ENCODE measurements at regions of chr18 and their contacts with region 1.

Region 1: GRCh38 chr18:35386600-35387351 is 9.6 kb upstream of the ZNF396 start:
- DNase-seq: peak; percentile 68
- ATAC-seq: peak; percentile 96
- H3K4me3 Mint-ChIP-seq: no peak overlapping the region
- H3K27ac Mint-ChIP-seq: no peak overlapping the region
- H3K4me1 Mint-ChIP-seq: peaks cover 9% of the 10 kb centered on the region
- H3K27me3 Mint-ChIP-seq: no peaks in the 10 kb centered on the region; the same call in 1 of the 2 replicates
- CTCF ChIP-seq: peak; percentile 90

Region 2: GRCh38 chr18:35355140-35355618 is 31.6 kb before region 1 on chr18:
- CTCF ChIA-PET with region 1: interaction called, 17 read pairs
- POLR2A ChIA-PET with region 1: no interaction called
- DNase-seq: peak; percentile 65
- ATAC-seq: peak; percentile 100
- H3K4me3 Mint-ChIP-seq: no peak overlapping the region
- H3K27ac Mint-ChIP-seq: no peak overlapping the region
- H3K4me1 Mint-ChIP-seq: no peaks in the 10 kb centered on the region; the same call in 1 of the 2 replicates
- H3K27me3 Mint-ChIP-seq: peaks cover 3% of the 10 kb centered on the region; the same call in 1 of the 2 replicates
- CTCF ChIP-seq: no peak

Region 3: DNA sequence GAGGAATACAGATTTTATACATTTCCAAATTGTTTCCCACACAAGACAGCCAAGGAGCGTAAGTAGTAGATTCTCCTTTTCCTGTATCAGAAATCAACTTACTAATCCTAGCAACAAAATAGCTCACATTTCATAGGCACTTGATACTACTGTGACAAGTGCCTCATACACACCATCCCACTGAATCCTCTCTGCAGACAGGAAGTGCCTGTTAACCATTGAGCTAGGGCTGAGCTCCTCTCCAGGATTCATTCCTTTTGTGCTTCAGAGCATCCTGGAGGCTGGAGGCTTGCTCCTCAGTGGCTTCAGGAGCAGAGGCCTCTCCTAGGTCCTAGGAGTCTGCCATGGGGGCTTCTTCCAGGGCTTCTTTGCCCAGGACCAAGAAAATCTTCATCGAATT is 11.2 kb after region 1 on chr18:
- CTCF ChIA-PET with region 1: interaction called, 19 read pairs
- POLR2A ChIA-PET with region 1: no interaction called
- DNase-seq: no peak
- ATAC-seq: no peak
- H3K4me3 Mint-ChIP-seq: no peak overlapping the region
- H3K27ac Mint-ChIP-seq: no peak overlapping the region
- H3K4me1 Mint-ChIP-seq: no peaks in the 10 kb centered on the region
- H3K27me3 Mint-ChIP-seq: no peaks in the 10 kb centered on the region; the same call in 1 of the 2 replicates
- CTCF ChIP-seq: no peak

Region 4: DNA sequence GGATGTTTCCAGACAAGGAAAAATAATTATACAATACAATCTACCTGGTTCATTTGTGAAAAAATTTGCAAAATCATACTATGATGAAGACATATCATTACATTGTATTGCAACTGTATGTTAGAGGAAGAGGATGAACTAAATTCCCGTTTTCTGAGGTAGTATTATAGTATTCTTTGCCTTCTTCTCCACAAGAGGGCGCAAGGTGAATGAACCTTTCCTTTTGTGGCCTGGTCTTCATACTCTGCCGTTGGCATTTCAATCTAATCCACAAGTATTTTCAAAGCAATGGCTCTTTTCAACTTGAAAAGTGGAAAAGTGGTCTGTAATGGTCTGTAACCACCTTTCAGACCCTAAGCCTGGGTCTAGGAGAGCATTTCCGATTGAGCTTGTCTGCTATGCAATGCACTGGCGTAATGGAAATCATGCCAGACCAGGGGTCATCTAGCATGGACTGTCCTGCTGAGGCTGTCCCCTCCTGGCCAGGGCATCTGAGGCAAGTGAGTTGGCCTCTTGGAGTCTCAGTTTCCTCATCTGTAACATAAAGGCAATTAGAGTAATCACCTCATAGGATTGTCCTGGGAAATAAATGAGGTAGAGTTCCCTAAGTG is 21.2 kb after region 1 on chr18:
- CTCF ChIA-PET with region 1: interaction called, 17 read pairs
- POLR2A ChIA-PET with region 1: no interaction called
- DNase-seq: no peak
- ATAC-seq: peak; percentile 76
- H3K4me3 Mint-ChIP-seq: no peak overlapping the region
- H3K27ac Mint-ChIP-seq: no peak overlapping the region
- H3K4me1 Mint-ChIP-seq: peaks cover 16% of the 10 kb centered on the region
- H3K27me3 Mint-ChIP-seq: peaks cover 6% of the 10 kb centered on the region
- CTCF ChIP-seq: peak; percentile 65

Region 5: DNA sequence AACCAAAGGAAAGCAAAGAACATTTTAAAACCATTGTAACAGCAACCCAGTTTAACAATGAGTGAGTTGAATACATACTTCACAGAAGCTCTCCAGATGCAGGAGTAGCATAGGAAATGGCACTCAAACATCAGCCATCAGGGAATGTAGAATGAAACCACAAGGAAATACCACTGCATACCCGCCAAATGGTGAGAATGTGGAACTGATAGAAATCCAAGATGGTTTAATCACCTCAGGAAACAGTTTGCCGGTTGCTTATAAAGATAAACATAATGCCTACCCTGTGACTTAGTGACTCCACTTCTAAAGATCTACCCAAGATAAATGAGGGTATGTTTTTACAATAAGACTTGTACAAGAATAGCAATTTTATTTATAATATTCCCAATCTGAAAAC is 326.8 kb after region 1 on chr18:
- CTCF ChIA-PET with region 1: interaction called, 10 read pairs
- POLR2A ChIA-PET with region 1: no interaction called
- DNase-seq: no peak
- ATAC-seq: no peak
- H3K4me3 Mint-ChIP-seq: no peak overlapping the region
- H3K27ac Mint-ChIP-seq: no peak overlapping the region
- H3K4me1 Mint-ChIP-seq: peaks cover 3% of the 10 kb centered on the region
- H3K27me3 Mint-ChIP-seq: no peaks in the 10 kb centered on the region
- CTCF ChIP-seq: no peak

Region 6: DNA sequence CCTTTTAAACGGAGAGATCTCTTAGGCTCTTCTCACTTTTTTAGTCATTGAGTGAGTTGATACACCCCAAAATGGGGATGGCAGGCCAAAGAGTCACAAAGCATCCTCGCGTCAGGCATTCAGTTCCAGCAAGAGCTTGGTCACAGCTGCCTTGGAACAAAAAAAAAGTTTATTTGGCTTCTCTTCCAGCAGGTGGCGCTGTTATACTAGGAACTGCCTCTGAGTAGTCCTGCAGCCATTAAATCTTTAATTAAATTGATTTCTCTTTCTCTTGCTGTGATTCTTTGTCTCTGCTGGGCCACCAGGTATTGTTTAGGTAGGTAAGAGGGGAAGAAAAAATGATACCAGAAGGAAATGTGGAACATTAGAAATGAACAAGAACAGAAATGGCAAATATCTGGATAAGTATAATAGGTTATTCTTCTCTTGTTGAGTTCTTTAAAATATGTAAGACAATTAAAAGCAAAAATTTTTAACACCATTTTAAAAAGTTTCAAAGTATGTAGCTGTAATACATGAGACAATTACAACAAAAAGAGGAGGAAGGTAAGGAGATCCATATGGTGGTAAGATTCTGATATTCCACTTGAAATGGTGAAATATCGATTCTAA is 369.8 kb after region 1 on chr18:
- CTCF ChIA-PET with region 1: interaction called, 11 read pairs
- POLR2A ChIA-PET with region 1: no interaction called
- DNase-seq: peak; percentile 63
- ATAC-seq: peak; percentile 85
- H3K4me3 Mint-ChIP-seq: no peak overlapping the region
- H3K27ac Mint-ChIP-seq: no peak overlapping the region
- H3K4me1 Mint-ChIP-seq: peaks cover 26% of the 10 kb centered on the region
- H3K27me3 Mint-ChIP-seq: no peaks in the 10 kb centered on the region; the same call in 1 of the 2 replicates
- CTCF ChIP-seq: peak; percentile 76; the same call in 1 of the 2 replicates

Measured in WTC11 (cell line).